Astrocyte of the cerebellum (primary cell): ENCODE measurements at regions of chr5 and their contacts with region 1.

Region 1: DNA sequence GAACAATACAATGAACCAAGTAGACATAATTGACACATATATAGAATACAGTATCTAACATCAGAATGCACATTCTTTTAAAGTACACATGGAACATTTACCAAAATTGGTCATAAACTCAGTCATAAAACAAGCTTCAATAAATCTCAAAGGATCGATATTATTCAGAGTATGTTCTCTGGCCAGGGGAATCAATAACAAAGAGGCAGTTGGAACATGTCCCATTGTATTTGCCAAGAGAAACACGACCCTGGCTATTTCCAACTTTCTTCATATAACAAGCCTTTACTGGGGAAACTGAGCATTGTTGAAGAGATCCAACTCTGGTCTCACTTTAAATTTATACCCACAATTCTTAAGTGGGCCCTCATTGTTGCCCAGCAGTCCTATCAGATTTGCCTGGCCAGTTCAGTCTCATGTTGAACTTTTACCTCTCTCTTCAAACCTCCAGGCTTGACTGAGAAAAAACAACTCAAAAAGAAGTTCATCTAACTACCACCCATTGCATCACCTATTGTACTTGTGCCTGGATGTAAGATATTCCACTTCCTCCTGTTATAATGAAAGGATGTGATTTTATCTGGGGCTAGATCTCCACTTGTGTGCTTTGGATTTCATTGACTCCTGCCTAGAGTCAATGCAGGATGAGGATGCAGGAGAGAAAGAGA is 162.5 kb downstream of the HSPA4 start:
- DNase-seq: no peak
- H3K4me3 ChIP-seq: no peak overlapping the region
- CTCF ChIP-seq: no peak

Region 2: DNA sequence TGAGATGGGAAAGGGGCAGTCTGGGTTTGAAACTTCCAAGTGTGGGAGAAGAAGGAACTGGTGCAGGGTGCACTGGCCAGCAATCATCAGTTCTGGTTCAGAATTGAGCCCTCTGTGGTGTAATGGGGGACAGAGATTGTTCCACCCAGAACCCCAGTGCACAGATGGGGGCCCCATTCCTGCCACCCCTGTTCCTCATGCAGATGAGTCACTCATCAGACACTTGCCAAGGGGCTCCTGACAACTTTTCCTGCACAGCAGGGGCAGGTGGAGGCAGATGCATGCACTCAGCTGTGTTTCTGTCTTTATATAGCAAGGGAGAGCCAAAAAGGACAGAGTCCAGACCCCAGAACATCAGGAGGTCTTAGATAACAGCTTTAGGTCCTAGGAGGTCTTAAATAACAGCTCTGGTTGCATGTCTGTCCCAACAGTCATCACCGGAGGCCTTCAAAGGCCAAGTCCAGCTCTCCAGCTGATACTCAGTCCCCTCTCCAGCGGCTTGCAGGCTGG is 90.5 kb after region 1 on chr5:
- in situ Hi-C with region 1: no loop called
- DNase-seq: no peak
- H3K4me3 ChIP-seq: no peak overlapping the region
- CTCF ChIP-seq: no peak

Region 3: DNA sequence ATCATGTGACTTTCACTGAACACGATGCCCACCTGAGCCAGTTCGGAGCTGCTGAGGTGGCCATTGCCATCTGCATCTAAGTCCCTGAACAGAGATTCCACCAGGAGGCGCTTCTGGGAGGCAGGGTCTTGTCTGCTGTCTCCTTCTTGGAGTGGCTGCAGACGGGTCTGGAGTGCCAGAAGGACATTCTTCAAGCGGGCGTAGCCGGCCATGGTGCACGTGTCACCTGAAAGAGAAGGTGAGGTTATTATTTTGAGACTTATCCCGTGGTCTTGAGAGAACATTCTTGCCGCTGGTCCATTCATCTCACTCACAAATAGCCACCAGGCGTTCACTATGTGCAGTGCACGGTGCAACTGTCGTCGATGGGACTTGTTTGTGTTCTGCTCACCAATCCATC is 102.1 kb after region 1 on chr5:
- in situ Hi-C with region 1: loop called (anchors 5 kb)
- DNase-seq: no peak
- H3K4me3 ChIP-seq: no peak overlapping the region
- CTCF ChIP-seq: peak; percentile 16